ENCODE measurements at regions of chr19 and their contacts with region 1.

Region 1: GRCh38 chr19:49497047-49497788 is 984 bp downstream of the RPS11 start:
- DNase-seq: peak; percentile 55
- ATAC-seq: peak; percentile 7
- H3K4me3 Mint-ChIP-seq: peak overlapping the region; percentile 93
- H3K27ac Mint-ChIP-seq: peak overlapping the region; percentile 97
- H3K4me1 Mint-ChIP-seq: peaks cover 68% of the 10 kb centered on the region
- H3K27me3 Mint-ChIP-seq: no peaks in the 10 kb centered on the region
- CTCF ChIP-seq: no peak

Region 2: DNA sequence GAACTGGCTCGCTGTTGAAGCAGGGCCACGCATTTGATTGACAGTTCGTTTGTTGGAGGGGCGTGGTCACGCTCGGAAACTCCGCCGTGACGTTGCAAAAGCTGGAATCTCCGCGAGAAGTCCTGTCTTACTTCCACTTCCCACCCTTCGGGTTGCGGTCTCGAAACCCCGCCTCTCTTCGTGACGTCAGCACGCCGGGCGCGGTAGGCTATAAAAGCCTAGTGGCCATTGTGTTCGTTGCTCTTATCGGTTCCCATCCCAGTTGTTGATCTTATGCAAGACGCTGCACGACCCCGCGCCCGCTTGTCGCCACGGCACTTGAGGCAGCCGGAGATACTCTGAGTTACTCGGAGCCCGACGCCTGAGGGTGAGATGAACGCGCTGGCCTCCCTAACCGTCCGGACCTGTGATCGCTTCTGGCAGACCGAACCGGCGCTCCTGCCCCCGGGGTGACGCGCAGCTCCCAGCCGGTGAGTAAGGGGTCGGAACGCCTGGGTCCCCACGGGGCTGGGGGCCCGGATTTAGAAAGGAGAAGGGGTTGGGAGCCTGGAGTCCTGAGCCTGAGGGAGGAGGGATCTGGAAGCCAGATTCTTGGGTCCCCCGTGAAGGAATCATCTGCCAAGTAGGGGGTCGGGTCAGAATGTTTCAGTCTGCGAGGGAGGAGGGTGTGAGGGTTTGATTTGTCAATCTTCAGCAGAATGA is 624.9 kb before region 1 on chr19 and contains the start of gene PPP1R15A:
- CTCF ChIA-PET with region 1: no interaction called
- POLR2A ChIA-PET with region 1: no interaction called
- intact Hi-C with region 1: loop called (anchors 10 kb)
- DNase-seq: peak; percentile 99
- ATAC-seq: peak; percentile 35
- H3K4me3 Mint-ChIP-seq: peak within 1 kb of the TSS; percentile 100
- H3K27ac Mint-ChIP-seq: peak within 1 kb of the TSS; percentile 100
- H3K4me1 Mint-ChIP-seq: peaks cover 42% of the 10 kb centered on the region
- H3K27me3 Mint-ChIP-seq: no peaks in the 10 kb centered on the region
- CTCF ChIP-seq: no peak
- total RNA-seq, gene PPP1R15A: 115 and 123 TPM in 2 replicates

Region 3: GRCh38 chr19:49264258-49264657 is 233.0 kb before region 1 on chr19:
- CTCF ChIA-PET with region 1: no interaction called
- POLR2A ChIA-PET with region 1: no interaction called
- intact Hi-C with region 1: no loop called
- DNase-seq: no peak
- ATAC-seq: no peak
- H3K4me3 Mint-ChIP-seq: no peak overlapping the region
- H3K27ac Mint-ChIP-seq: no peak overlapping the region
- H3K4me1 Mint-ChIP-seq: peaks cover 6% of the 10 kb centered on the region
- H3K27me3 Mint-ChIP-seq: peaks cover 13% of the 10 kb centered on the region
- CTCF ChIP-seq: no peak

Region 4: GRCh38 chr19:49340069-49340864 is 157.0 kb before region 1 on chr19:
- CTCF ChIA-PET with region 1: no interaction called
- POLR2A ChIA-PET with region 1: interaction called, 18 read pairs
- intact Hi-C with region 1: no loop called
- DNase-seq: peak; percentile 93
- ATAC-seq: peak; percentile 72
- H3K4me3 Mint-ChIP-seq: peak overlapping the region; percentile 80
- H3K27ac Mint-ChIP-seq: peak overlapping the region; percentile 93
- H3K4me1 Mint-ChIP-seq: peaks cover 83% of the 10 kb centered on the region
- H3K27me3 Mint-ChIP-seq: no peaks in the 10 kb centered on the region
- CTCF ChIP-seq: no peak

Region 5: DNA sequence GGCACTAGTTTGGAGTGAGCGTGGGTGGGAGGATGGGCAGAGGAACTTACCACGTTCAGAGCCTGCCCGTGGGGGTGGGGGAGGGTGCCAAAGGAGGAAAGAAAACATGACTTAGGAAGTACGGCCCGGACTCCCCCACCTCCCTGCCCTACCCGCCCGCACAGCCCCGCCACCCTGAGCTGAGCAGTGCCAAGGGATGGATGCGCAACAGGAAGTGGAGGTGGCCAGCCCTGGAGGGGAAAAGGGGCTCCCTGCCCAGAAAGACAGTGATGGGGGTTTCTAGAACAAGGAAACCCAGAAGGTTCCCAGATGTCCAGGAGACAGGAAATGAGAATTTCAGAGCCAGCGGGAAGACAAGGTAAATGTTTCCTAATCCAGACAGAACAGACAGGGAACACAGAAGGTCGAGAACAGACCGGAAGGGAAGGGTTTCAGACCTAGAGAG is 141.3 kb before region 1 on chr19:
- CTCF ChIA-PET with region 1: no interaction called
- POLR2A ChIA-PET with region 1: no interaction called
- intact Hi-C with region 1: no loop called
- DNase-seq: no peak
- ATAC-seq: no peak
- H3K4me3 Mint-ChIP-seq: peak overlapping the region; percentile 73
- H3K27ac Mint-ChIP-seq: peak overlapping the region; percentile 80
- H3K4me1 Mint-ChIP-seq: peaks cover 56% of the 10 kb centered on the region
- H3K27me3 Mint-ChIP-seq: no peaks in the 10 kb centered on the region
- CTCF ChIP-seq: no peak

Region 6: DNA sequence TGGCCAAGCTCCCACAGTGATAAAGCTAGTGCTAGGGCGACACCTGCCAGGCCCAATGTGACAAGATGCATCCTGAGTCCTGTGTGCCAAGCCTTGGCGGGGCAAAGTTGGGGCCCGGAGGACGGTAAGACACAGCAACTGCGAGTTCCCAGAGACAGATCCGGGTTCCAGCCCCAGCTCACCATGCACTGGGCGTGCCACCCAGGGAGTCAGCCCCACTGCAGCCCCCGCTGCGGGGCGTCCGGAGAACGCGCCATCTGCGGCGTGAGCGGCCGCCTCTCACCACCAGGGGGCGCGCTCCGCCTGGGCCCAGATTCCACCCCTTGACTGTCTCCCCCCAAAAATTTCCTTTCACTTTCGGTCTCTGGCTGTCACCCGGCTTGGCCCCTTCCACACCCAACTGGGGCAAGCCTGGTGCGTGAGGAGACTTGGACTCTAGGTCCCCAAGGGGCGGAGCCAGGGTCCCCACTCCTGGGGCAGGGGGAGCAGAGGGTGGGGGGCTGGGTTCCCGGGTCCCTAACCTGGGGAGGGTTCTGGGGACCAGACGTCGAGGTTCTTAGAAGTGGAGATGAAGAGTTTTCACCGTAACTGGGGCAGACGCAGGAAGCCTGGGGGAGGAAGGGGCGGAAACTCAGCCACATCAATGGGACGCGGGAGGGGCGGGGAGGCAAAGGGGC is 23.2 kb before region 1 on chr19 and contains the start of gene FLT3LG:
- CTCF ChIA-PET with region 1: interaction called, 3 read pairs
- POLR2A ChIA-PET with region 1: interaction called, 9 read pairs
- intact Hi-C with region 1: loop called (anchors 1 kb)
- DNase-seq: peak; percentile 92
- ATAC-seq: peak; percentile 45
- H3K4me3 Mint-ChIP-seq: peak within 1 kb of the TSS; percentile 92
- H3K27ac Mint-ChIP-seq: peak within 1 kb of the TSS; percentile 91
- H3K4me1 Mint-ChIP-seq: peaks cover 67% of the 10 kb centered on the region
- H3K27me3 Mint-ChIP-seq: no peaks in the 10 kb centered on the region
- CTCF ChIP-seq: peak; percentile 52
- total RNA-seq, gene FLT3LG: 15.4 and 17.7 TPM in 2 replicates

Region 7: DNA sequence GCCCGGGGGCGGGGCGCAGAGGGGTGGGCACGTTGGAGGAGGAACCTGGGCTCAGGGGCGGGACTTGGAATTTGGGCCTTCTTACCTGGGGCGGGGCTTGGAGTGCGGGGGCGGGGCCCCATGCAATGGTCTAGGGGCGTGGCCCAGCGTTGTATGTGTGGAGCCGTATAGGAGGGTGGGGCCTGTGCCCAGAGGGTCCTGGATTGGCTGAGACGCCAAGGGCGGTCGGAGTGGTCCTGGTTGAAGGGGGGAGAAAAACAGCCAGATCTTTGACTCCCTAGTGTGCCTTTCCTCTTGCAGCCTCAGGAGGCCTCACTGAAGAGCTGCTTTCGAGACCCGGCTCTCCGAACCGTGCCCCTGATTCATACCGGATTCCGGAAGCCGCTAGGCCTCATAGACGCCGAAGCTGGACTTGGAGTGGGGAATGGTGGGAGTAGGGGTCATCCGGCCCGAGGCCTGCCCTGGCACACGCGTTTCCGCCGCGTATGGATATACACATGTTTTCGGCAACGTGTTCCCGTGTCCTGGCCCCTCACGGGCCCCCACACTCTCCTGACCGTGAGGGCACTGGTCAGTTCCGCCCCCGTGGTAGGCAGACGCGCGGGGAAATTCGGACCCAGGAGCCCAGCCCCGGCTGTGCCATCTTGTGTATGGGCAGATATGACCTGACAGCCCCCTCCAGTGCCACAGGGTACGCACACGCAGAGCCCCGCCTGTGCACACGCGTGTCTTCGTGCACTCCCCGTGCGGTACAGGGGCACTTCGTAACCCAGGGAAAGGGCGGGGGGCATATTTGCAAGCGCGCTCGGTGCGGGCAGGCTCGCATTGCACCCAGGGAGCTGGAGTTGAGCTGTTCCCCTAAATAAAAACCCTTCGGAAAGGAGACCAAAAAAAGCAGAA is 93.1 kb after region 1 on chr19:
- CTCF ChIA-PET with region 1: no interaction called
- POLR2A ChIA-PET with region 1: interaction called, 10 read pairs
- intact Hi-C with region 1: loop called (anchors 5 kb)
- DNase-seq: peak; percentile 96
- ATAC-seq: peak; percentile 81
- H3K4me3 Mint-ChIP-seq: peak overlapping the region; percentile 85
- H3K27ac Mint-ChIP-seq: peak overlapping the region; percentile 89
- H3K4me1 Mint-ChIP-seq: peaks cover 34% of the 10 kb centered on the region
- H3K27me3 Mint-ChIP-seq: no peaks in the 10 kb centered on the region
- CTCF ChIP-seq: no peak

Region 8: GRCh38 chr19:49605605-49606004 is 108.4 kb after region 1 on chr19:
- CTCF ChIA-PET with region 1: no interaction called
- POLR2A ChIA-PET with region 1: no interaction called
- intact Hi-C with region 1: no loop called
- DNase-seq: no peak
- ATAC-seq: no peak
- H3K4me3 Mint-ChIP-seq: no peak overlapping the region
- H3K27ac Mint-ChIP-seq: no peak overlapping the region
- H3K4me1 Mint-ChIP-seq: no peaks in the 10 kb centered on the region
- H3K27me3 Mint-ChIP-seq: no peaks in the 10 kb centered on the region
- CTCF ChIP-seq: no peak

Region 9: GRCh38 chr19:49817964-49818648 is 320.9 kb after region 1 on chr19 and contains the start of gene MED25:
- CTCF ChIA-PET with region 1: no interaction called
- POLR2A ChIA-PET with region 1: interaction called, 10 read pairs
- intact Hi-C with region 1: loop called (anchors 2 kb)
- DNase-seq: peak; percentile 91
- ATAC-seq: peak; percentile 59
- H3K4me3 Mint-ChIP-seq: peak within 1 kb of the TSS; percentile 98
- H3K27ac Mint-ChIP-seq: peak within 1 kb of the TSS; percentile 99
- H3K4me1 Mint-ChIP-seq: peaks cover 40% of the 10 kb centered on the region
- H3K27me3 Mint-ChIP-seq: no peaks in the 10 kb centered on the region
- CTCF ChIP-seq: no peak
- total RNA-seq, gene MED25: 70.1 and 88.8 TPM in 2 replicates